ENCODE measurements at regions of chr1 and their contacts with region 1.

Region 1: DNA sequence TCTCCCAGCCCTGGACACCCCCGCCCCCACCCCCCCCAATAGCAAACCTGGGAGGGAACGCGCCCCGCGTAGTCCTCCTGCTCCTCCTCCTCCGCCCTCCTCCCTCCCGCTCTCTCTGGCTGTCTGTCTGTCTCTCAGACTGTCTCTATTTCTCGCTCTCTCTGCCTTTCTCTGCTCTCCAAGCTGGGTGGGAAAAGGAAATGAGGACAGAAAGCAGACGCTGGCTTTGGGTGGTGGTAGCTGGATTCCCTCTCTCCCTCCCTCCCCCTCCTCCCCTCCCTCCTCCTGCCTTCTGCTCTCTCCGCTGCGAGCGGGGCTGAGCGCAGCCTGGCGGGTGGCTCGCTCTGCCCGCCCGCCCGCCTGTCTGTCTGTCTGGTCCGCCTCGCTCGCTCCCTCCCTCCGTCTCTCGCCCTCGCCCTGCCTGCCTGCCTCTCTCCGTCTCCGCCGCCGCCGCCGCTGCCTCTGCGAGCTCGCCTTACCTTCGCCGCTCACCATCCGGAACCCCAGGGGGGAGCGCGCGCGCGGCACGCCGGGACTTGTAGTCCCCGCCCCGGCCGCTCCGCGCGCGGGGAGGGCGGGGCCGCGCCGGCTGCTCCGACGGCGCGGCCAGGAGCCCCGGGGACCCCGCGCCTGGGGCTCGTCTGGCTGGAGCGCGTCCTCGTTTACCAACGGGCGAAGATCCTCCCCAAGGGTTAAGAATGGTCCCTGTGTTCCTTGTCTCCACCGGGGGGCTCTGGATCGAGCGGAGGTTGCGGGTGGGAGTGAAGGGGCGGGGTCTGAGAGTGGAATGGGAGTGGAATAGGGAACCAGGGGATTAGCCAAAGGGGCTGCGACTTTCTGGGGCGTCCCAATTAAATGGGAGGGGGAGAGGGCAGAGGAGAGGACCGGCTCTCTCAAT is at the start of gene AHDC1:
- DNase-seq: peak; percentile 93 to 97 (median 96)
- ATAC-seq: peak; percentile 72 to 76
- H3K4me3 ChIP-seq: peak within 1 kb of the TSS; percentile 84
- H3K27ac ChIP-seq: peak within 1 kb of the TSS; percentile 83
- H3K4me1 ChIP-seq: peaks cover 15% of the 10 kb centered on the region
- H3K27me3 ChIP-seq: no peaks in the 10 kb centered on the region
- total RNA-seq, gene AHDC1: 40.4 to 53.5 (median 50.6) TPM

Region 2: DNA sequence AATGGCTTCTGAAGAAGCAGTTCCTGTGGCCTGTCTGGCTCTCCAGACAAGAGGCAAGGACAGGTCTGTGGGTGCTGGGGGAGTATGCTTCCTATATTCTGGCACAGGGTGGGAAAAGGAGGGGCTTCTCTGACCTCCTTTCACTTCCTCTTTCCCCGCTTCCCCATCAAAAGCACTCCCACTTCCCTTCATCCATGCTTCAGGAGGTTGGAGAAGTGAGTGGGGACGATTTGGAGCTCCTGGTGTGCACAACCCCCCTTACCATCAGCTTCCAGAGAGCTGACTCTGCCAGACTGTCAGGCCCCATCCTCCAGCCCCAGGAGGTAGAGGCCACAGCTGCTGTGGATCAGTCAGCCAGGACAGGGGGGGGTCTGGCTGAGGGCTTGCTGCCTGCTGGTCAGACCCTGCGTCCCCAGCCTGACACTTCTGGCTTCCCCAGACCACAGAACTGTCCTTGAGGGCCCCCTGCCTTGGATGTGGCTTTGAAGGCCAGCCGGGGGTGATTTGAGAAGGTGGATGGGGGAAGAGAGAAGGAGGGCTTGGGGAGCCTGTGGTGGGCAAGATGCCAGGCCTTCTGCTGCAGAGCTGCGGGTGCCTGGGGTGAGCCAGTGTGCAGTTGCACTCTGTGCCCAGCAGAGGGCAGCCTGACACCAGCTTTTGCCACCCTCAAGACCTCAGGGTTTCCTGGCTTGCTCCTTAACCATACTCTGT is 303.4 kb before region 1 on chr1:
- intact Hi-C with region 1: loop called (anchors 5 kb)
- DNase-seq: peak; percentile 82 to 94 (median 93)
- ATAC-seq: peak; percentile 86
- H3K4me3 ChIP-seq: no peak overlapping the region
- H3K27ac ChIP-seq: peak overlapping the region; percentile 78
- H3K4me1 ChIP-seq: peaks cover 13% of the 10 kb centered on the region
- H3K27me3 ChIP-seq: no peaks in the 10 kb centered on the region

Region 3: DNA sequence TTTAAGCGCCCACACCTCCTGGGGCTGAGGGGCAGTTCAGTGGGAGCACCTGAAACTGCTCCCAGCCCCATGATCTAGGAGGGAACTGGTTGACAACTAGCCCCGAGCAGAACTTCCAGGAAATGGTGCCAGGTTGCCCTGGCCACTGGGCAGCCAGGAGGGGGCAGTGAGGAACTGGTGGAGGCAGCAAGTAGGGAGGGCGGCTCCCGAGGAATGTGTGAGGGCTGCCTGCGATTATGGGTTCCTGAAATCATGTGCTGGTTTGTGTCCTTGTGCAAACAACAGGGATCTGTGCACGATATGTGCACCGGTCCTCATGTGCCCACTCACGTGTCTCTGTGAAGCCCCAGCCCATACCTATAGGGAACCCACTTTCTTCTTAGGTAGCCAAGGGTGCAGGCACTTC is 201.6 kb before region 1 on chr1:
- intact Hi-C with region 1: loop called (anchors 2 to 5 kb)
- DNase-seq: peak; percentile 76 to 92 (median 91)
- ATAC-seq: peak; percentile 31 to 53
- H3K4me3 ChIP-seq: no peak overlapping the region
- H3K27ac ChIP-seq: peak overlapping the region; percentile 84
- H3K4me1 ChIP-seq: peaks cover 34% of the 10 kb centered on the region
- H3K27me3 ChIP-seq: no peaks in the 10 kb centered on the region

Region 4: GRCh38 chr1:27416387-27417111 is 187.4 kb before region 1 on chr1:
- intact Hi-C with region 1: loop called in 1 of 4 experiments (anchors 5 kb)
- DNase-seq: no peak
- ATAC-seq: peak in 1 of 2 donors; percentile 36
- H3K4me3 ChIP-seq: no peak overlapping the region
- H3K27ac ChIP-seq: peak overlapping the region; percentile 32
- H3K4me1 ChIP-seq: peaks cover 12% of the 10 kb centered on the region
- H3K27me3 ChIP-seq: no peaks in the 10 kb centered on the region

Region 5: DNA sequence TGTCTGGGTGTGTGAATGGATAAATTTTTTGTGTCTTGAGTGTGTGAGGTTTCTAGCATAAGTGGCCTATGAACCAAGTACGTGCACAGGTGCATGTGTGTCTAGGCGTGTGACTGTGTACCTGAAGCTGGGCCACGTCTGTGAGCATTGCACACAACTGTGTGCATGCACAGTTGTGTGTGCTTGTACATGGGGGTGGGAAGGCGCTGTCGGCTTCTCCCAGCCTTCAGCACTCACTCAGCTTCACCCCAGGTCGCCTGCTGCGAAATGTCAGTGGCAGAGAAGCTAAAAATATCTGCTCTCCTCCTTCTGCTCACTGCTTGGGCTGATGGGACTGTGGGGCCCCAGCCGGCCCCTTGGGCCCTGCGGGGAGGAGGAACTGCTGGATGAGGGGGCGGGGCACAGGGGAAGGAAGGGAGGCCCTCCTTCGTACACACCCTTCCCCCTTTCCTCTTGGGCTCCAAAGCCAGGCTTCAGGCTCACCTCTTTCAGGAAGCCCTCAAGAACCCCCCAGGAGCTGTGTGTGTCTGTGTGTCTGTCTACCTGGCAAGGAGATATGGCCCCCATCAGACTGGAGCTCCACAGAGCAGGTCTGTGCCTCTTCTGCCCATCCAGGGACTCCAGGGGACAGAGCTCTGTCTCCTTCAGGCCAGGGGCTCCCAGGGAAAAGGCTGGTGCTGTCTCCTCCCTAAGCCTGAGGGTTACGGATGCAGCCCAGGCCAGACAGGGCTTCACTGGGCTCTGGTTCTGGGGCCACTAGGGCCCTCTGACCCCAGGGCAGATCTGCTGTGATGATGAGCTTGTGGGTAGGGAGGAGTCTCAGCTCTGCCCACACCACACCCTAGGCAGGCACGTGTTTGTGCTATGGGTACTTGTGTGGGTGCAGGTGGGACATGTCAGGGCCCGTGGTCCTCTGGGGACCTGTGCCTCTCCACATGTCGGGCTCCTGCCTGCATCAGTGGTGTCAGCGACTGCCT is 78.3 kb before region 1 on chr1:
- intact Hi-C with region 1: loop called in 1 of 4 experiments (anchors 10 kb)
- DNase-seq: peak; percentile 83 to 95 (median 92)
- ATAC-seq: peak; percentile 69 to 75
- H3K4me3 ChIP-seq: peak overlapping the region; percentile 0
- H3K27ac ChIP-seq: peak overlapping the region; percentile 84
- H3K4me1 ChIP-seq: peaks cover 58% of the 10 kb centered on the region
- H3K27me3 ChIP-seq: no peaks in the 10 kb centered on the region

Region 6: GRCh38 chr1:27556781-27557595 is 46.9 kb before region 1 on chr1:
- intact Hi-C with region 1: loop called in 3 of 4 experiments (anchors 5 kb)
- DNase-seq: peak; percentile 96 to 97 (median 97)
- ATAC-seq: peak; percentile 79 to 85
- H3K4me3 ChIP-seq: no peak overlapping the region
- H3K27ac ChIP-seq: peak overlapping the region; percentile 67
- H3K4me1 ChIP-seq: peaks cover 27% of the 10 kb centered on the region
- H3K27me3 ChIP-seq: no peaks in the 10 kb centered on the region

Region 7: DNA sequence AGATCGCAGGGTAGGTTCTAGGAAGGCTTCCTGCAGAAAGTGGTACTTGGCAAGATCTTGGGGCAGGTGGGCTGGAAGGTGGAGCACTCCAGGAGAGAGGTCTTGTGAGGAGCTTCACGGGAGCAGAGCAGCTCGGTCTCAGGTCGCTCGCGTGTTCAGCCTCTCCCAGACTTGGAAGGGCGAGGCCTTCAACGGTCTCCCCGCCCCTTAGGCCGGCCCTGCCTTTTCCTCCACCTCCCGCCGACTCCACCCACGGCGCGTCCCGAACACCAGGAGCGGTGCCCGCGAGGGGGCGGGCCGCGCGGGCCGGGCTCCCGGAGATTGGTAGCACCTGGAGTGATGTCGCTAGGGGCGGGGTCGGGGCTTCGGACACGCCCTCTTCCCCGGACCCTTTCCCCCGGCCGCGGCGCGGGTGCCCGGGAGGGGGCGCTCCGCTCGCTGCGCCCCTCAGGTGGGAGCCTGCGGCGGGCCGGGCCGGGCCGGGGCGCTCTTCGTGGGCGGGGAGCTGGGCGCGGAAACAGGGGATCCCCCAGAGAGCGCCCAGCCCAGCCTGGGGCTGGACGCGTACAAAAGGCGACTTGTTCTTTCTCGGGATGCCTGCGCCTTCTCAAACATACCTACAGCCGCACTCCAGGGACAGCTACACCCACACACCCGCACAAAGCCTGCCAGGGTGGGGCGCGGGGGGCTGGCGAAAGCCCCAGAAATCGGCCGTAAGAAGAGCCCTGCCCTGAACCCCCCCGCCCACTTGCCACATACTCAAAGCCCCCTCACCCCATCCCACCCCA is 35.4 kb before region 1 on chr1:
- intact Hi-C with region 1: loop called in 2 of 4 experiments (anchors 5 kb)
- DNase-seq: peak; percentile 95 to 98 (median 98)
- ATAC-seq: peak; percentile 86 to 88
- H3K4me3 ChIP-seq: no peak overlapping the region
- H3K27ac ChIP-seq: peak overlapping the region; percentile 85
- H3K4me1 ChIP-seq: peaks cover 71% of the 10 kb centered on the region
- H3K27me3 ChIP-seq: no peaks in the 10 kb centered on the region

Region 8: GRCh38 chr1:27830621-27831424 is 226.9 kb after region 1 on chr1 and contains the start of gene PPP1R8:
- intact Hi-C with region 1: no loop called
- DNase-seq: peak; percentile 95 to 98 (median 97)
- ATAC-seq: peak; percentile 99 to 100
- H3K4me3 ChIP-seq: peak within 1 kb of the TSS; percentile 87
- H3K27ac ChIP-seq: peak within 1 kb of the TSS; percentile 95
- H3K4me1 ChIP-seq: peaks cover 4% of the 10 kb centered on the region
- H3K27me3 ChIP-seq: no peaks in the 10 kb centered on the region
- total RNA-seq, gene PPP1R8: 24.2 to 26.8 (median 24.7) TPM

Measured in right cardiac atrium (tissue), 5 donors.